Activated CD4-positive, alpha-beta T cell treated with anti-CD3 and anti-CD28 coated beads, Interleukin-2, amount 10 ng/mL, durations not matched to agents 24 days and 14 days (primary cell): ENCODE measurements at regions of chr3 and their contacts with region 1.

Region 1: GRCh38 chr3:53114011-53114400 is 16.2 kb downstream of the RFT1 start:
- DNase-seq: peak; percentile 95
- H3K4me3 Mint-ChIP-seq: no peak overlapping the region
- H3K27ac Mint-ChIP-seq: no peak overlapping the region
- H3K4me1 Mint-ChIP-seq: peaks cover 15% of the 10 kb centered on the region
- H3K27me3 Mint-ChIP-seq: no peaks in the 10 kb centered on the region

Region 2: GRCh38 chr3:52983336-52983807 is 130.6 kb before region 1 on chr3:
- intact Hi-C with region 1: loop called (anchors 1 kb)
- DNase-seq: peak; percentile 92
- H3K4me3 Mint-ChIP-seq: peak overlapping the region; percentile 68
- H3K27ac Mint-ChIP-seq: peak overlapping the region; percentile 84
- H3K4me1 Mint-ChIP-seq: peaks cover 29% of the 10 kb centered on the region
- H3K27me3 Mint-ChIP-seq: no peaks in the 10 kb centered on the region

Region 3: GRCh38 chr3:53102601-53103147 is 11.3 kb before region 1 on chr3:
- intact Hi-C with region 1: loop called (anchors 1 kb)
- DNase-seq: peak; percentile 90
- H3K4me3 Mint-ChIP-seq: peak overlapping the region; percentile 77
- H3K27ac Mint-ChIP-seq: peak overlapping the region; percentile 94
- H3K4me1 Mint-ChIP-seq: peaks cover 72% of the 10 kb centered on the region
- H3K27me3 Mint-ChIP-seq: no peaks in the 10 kb centered on the region

Region 4: GRCh38 chr3:53130179-53131061 is 16.4 kb after region 1 on chr3 and contains the start of gene RFT1:
- intact Hi-C with region 1: loop called (anchors 1 kb)
- DNase-seq: peak; percentile 100
- H3K4me3 Mint-ChIP-seq: peak within 1 kb of the TSS; percentile 89
- H3K27ac Mint-ChIP-seq: peak within 1 kb of the TSS; percentile 93
- H3K4me1 Mint-ChIP-seq: peaks cover 15% of the 10 kb centered on the region
- H3K27me3 Mint-ChIP-seq: no peaks in the 10 kb centered on the region
- total RNA-seq, gene RFT1: 47.4 and 47.6 TPM in 2 replicates

Region 5: DNA sequence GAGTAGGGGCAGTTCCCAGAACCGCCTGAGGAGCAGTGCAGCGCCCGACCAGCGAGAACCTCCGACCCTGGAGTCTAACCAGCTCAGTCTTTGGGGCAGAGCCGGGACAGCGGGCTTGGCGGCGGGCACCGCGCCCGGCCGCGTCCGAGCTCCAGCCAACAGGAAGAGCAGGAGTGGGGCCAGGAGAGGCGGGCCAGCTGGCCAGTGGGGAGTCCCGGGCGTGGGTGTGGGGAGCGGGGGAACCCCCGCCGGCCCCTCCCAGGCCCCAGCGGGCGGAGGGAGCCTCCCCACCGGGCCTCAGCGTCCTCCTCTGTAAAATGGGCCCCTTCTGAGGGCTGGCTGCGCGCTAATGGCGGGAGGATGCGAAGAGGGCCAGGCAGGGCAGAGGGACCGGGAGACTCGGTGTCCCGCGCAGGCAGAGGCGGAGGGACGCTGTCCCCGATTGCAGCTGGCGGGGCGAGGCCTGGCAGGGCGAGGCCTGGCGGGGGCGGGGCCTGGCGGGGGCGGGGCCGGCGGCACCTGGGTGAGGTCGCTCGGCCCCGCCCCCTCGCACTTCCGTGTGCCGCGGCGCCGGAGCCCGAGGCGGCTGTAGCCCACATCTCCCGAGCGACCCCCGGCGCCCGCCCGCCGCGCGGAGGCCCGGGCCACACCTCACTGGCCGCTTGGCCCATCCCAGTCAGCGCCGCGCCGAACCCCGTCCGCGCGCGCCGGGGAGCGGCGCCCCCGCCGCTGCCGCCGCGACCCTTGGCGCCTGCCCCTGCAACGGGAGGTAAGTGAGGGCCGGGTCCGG is 46.8 kb after region 1 on chr3 and contains the start of gene PRKCD:
- intact Hi-C with region 1: loop called (anchors 2 kb)
- DNase-seq: peak; percentile 92
- H3K4me3 Mint-ChIP-seq: peak within 1 kb of the TSS; percentile 87
- H3K27ac Mint-ChIP-seq: peak within 1 kb of the TSS; percentile 90
- H3K4me1 Mint-ChIP-seq: peaks cover 24% of the 10 kb centered on the region
- H3K27me3 Mint-ChIP-seq: peaks cover 36% of the 10 kb centered on the region
- total RNA-seq, gene PRKCD: 28.1 and 28.8 TPM in 2 replicates

Region 6: DNA sequence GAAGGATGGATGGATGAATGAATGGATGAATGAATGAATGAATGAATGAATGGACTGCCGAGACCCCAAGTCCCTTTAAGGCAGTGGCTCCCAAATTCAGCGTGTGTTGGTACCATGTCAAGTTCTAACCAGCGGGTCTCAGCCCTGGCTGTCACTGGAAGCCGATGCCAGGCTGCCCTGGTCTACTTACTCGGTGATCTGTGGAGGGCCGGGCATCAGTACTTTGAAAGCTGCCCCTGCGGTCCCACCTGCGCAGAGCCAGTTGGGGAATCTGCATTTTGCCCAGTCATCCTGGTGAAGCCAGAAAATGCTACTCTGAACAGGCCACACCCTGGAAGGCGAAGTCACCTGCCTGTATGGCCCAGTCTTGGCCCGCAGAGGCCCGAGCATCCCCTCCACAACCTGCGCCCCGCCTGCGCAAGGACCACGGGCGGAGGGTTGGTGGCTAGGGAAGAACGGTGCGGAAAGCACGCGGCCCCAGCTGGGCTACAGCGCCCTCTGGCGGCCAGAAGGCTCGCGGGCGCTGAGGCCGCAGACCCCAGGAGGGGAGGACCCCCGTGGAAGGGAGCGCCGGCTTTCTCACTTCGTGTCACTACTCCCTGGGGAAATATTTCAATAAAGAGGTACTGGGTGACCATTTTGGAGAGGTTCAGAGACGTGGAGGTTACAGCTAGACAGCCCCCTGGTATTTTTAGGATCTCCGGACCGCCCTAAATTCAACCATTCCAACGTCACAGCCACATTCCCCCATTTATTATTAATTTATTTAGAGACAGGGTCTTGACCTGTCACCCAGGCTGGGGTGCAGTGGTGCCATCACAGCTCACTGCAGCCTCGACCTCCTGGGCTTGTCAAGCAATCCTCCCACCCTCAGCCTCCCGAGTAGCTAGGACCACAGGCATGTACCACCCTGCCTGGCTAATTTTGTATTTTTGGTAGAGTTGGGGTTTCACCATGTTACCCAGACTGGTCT is 81.9 kb after region 1 on chr3:
- intact Hi-C with region 1: loop called (anchors 1 kb)
- DNase-seq: peak; percentile 89
- H3K4me3 Mint-ChIP-seq: no peak overlapping the region
- H3K27ac Mint-ChIP-seq: peak overlapping the region; percentile 30
- H3K4me1 Mint-ChIP-seq: peaks cover 6% of the 10 kb centered on the region
- H3K27me3 Mint-ChIP-seq: no peaks in the 10 kb centered on the region

Region 7: GRCh38 chr3:53347261-53348064 is 233.5 kb after region 1 on chr3 and contains the start of gene DCP1A:
- intact Hi-C with region 1: no loop called
- DNase-seq: peak; percentile 99
- H3K4me3 Mint-ChIP-seq: peak within 1 kb of the TSS; percentile 96
- H3K27ac Mint-ChIP-seq: peak within 1 kb of the TSS; percentile 100
- H3K4me1 Mint-ChIP-seq: peaks cover 20% of the 10 kb centered on the region
- H3K27me3 Mint-ChIP-seq: no peaks in the 10 kb centered on the region
- total RNA-seq, gene DCP1A: 42.1 and 50.3 TPM in 2 replicates